Natural killer cell (primary cell): ENCODE measurements at regions of chr6 and their contacts with region 1.

Region 1: GRCh38 chr6:152863618-152864326 is 113.2 kb downstream of the VIP start:
- DNase-seq: peak; percentile 21 to 80
- ATAC-seq: peak; percentile 53 to 81 (median 78)
- H3K4me3 ChIP-seq: no peak overlapping the region
- H3K4me3 Mint-ChIP-seq: no peak overlapping the region
- H3K27ac ChIP-seq: no peak overlapping the region
- H3K27ac Mint-ChIP-seq: no peak overlapping the region
- H3K4me1 ChIP-seq: no peaks in the 10 kb centered on the region
- H3K4me1 Mint-ChIP-seq: no peaks in the 10 kb centered on the region
- H3K27me3 ChIP-seq: peaks cover 2% of the 10 kb centered on the region
- H3K27me3 Mint-ChIP-seq: peaks cover 12 to 15% of the 10 kb centered on the region in 2 donors
- CTCF ChIP-seq: peak; percentile 70

Region 2: DNA sequence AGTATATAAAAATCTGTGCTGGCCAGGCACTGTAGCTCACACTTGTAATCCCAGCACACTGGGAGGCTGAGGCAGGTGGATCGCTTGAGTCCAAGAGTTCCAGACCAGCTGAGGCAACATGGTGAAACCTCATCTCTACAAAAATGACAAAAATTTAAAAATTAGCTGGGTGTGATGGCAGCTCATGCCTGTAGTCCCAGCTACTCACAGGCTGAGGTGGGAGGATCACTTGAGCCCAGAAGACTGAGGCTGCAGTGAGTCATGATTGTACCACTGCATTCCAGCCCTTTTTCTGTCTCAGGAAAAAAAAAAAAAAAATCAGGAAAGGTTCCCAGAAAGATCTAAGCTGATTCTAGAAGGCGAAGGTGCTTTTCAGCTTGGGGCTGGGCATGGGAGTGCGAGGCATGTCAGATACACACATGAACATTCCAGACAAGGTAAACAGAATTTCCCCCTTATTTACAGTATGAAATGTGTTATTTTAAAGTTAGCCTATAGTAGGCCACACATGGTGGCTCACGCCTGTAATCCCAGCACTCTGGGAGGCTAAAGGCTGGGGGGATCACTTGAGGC is 1417.6 kb before region 1 on chr6:
- intact Hi-C with region 1: no loop called
- DNase-seq: no peak
- ATAC-seq: no peak
- H3K4me3 ChIP-seq: no peak overlapping the region
- H3K4me3 Mint-ChIP-seq: no peak overlapping the region
- H3K27ac ChIP-seq: no peak overlapping the region
- H3K27ac Mint-ChIP-seq: no peak overlapping the region
- H3K4me1 ChIP-seq: peaks cover 6% of the 10 kb centered on the region
- H3K4me1 Mint-ChIP-seq: peaks cover 11 to 17% of the 10 kb centered on the region in 2 donors
- H3K27me3 ChIP-seq: no peaks in the 10 kb centered on the region
- H3K27me3 Mint-ChIP-seq: no peaks in the 10 kb centered on the region
- CTCF ChIP-seq: no peak

Region 3: DNA sequence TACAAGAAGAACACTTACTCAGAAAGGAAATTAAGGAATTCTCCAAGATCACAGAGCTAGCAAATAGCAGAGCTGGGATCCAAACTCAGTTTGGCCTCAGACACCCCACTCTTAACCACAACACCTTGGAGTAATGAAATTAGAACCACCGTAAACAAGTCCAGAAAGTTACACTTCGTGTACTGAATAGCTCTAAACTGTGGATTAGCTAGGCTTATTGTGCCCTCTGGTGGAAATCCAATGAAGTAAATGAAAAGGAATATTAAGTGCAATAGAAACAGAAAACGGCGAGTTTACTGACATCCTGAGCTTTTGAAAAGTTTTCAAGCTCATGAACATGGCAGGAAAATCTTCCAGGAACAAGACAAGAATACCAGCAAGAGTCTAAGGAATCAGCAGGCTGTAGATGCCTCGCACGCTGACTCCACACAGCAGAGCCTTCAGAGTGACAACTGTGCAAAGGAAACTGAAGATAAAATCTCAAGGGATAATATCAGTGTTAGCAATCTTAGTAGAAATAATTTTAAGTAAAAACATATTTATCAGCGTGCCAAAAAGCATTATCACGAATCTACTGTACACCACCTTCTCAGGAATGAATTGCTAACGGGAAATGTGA is 84.5 kb after region 1 on chr6:
- intact Hi-C with region 1: loop called (anchors 5 kb)
- DNase-seq: peak in 1 of 2 donors; percentile 62
- ATAC-seq: peak; percentile 49 to 77 (median 67)
- H3K4me3 ChIP-seq: no peak overlapping the region
- H3K4me3 Mint-ChIP-seq: no peak overlapping the region
- H3K27ac ChIP-seq: no peak overlapping the region
- H3K27ac Mint-ChIP-seq: no peak overlapping the region
- H3K4me1 ChIP-seq: no peaks in the 10 kb centered on the region
- H3K4me1 Mint-ChIP-seq: peaks cover 8 to 9% of the 10 kb centered on the region in 2 donors
- H3K27me3 ChIP-seq: peaks cover 5% of the 10 kb centered on the region
- H3K27me3 Mint-ChIP-seq: peaks cover 22 to 60% of the 10 kb centered on the region in 2 donors
- CTCF ChIP-seq: peak; percentile 53

Region 4: GRCh38 chr6:152959333-152959732 is 95.6 kb after region 1 on chr6:
- intact Hi-C with region 1: no loop called
- DNase-seq: no peak
- ATAC-seq: no peak
- H3K4me3 ChIP-seq: no peak overlapping the region
- H3K4me3 Mint-ChIP-seq: no peak overlapping the region
- H3K27ac ChIP-seq: no peak overlapping the region
- H3K27ac Mint-ChIP-seq: no peak overlapping the region
- H3K4me1 ChIP-seq: no peaks in the 10 kb centered on the region
- H3K4me1 Mint-ChIP-seq: no peaks in the 10 kb centered on the region
- H3K27me3 ChIP-seq: no peaks in the 10 kb centered on the region
- H3K27me3 Mint-ChIP-seq: peaks cover 15 to 42% of the 10 kb centered on the region in 2 donors
- CTCF ChIP-seq: no peak

Region 5: GRCh38 chr6:153312641-153313040 is 448.9 kb after region 1 on chr6:
- intact Hi-C with region 1: loop called (anchors 2 kb)
- DNase-seq: peak in 1 of 2 donors; percentile 46
- ATAC-seq: peak in 1 of 3 donors; percentile 75
- H3K4me3 ChIP-seq: no peak overlapping the region
- H3K4me3 Mint-ChIP-seq: no peak overlapping the region
- H3K27ac ChIP-seq: no peak overlapping the region
- H3K27ac Mint-ChIP-seq: no peak overlapping the region
- H3K4me1 ChIP-seq: no peaks in the 10 kb centered on the region
- H3K4me1 Mint-ChIP-seq: no peaks in the 10 kb centered on the region
- H3K27me3 ChIP-seq: no peaks in the 10 kb centered on the region
- H3K27me3 Mint-ChIP-seq: peaks cover 7% of the 10 kb centered on the region in 2 donors
- CTCF ChIP-seq: peak; percentile 55